Stomach (tissue), 19 donors: ENCODE measurements at regions of chr17 and their contacts with region 1.

Region 1: GRCh38 chr17:49575579-49576087 is at the start of gene NXPH3:
- DNase-seq: peak; percentile 80 to 86
- H3K4me3 ChIP-seq: peak within 1 kb of the TSS; percentile 57 to 83 (median 74)
- H3K27ac ChIP-seq: peak within 1 kb of the TSS in 4 of 5 donors; percentile 61 to 85 (median 74)
- H3K4me1 ChIP-seq: peaks cover 19 to 56% (median 43%) of the 10 kb centered on the region in 4 donors
- H3K27me3 ChIP-seq: peaks cover 0 to 58% (median 16%) of the 10 kb centered on the region in 3 donors
- CTCF ChIP-seq: peak in 3 of 7 experiments; percentile 45 to 82 (median 49)
- EP300 ChIP-seq: no peak
- POLR2A ChIP-seq: no peak
- total RNA-seq, gene NXPH3: 1.0 to 10.7 (median 1.3) TPM in 3 of 5 donors, not detected in the others

Region 2: GRCh38 chr17:49486012-49486641 is 89.5 kb before region 1 on chr17:
- intact Hi-C with region 1: no loop called
- DNase-seq: peak in 1 of 2 donors; percentile 69
- H3K4me3 ChIP-seq: no peak overlapping the region
- H3K27ac ChIP-seq: no peak overlapping the region
- H3K4me1 ChIP-seq: peaks cover 0 to 4% (median 0%) of the 10 kb centered on the region in 4 donors
- H3K27me3 ChIP-seq: peaks cover 0 to 84% (median 30%) of the 10 kb centered on the region in 3 donors
- CTCF ChIP-seq: no peak
- EP300 ChIP-seq: no peak
- POLR2A ChIP-seq: no peak

Region 3: GRCh38 chr17:49616601-49617131 is 41.0 kb after region 1 on chr17:
- intact Hi-C with region 1: no loop called
- DNase-seq: peak; percentile 48 to 52
- H3K4me3 ChIP-seq: no peak overlapping the region
- H3K27ac ChIP-seq: peak overlapping the region; percentile 45 to 77 (median 56)
- H3K4me1 ChIP-seq: peaks cover 18 to 63% (median 39%) of the 10 kb centered on the region in 4 donors
- H3K27me3 ChIP-seq: no peaks in the 10 kb centered on the region
- CTCF ChIP-seq: no peak
- EP300 ChIP-seq: no peak
- POLR2A ChIP-seq: no peak

Region 4: DNA sequence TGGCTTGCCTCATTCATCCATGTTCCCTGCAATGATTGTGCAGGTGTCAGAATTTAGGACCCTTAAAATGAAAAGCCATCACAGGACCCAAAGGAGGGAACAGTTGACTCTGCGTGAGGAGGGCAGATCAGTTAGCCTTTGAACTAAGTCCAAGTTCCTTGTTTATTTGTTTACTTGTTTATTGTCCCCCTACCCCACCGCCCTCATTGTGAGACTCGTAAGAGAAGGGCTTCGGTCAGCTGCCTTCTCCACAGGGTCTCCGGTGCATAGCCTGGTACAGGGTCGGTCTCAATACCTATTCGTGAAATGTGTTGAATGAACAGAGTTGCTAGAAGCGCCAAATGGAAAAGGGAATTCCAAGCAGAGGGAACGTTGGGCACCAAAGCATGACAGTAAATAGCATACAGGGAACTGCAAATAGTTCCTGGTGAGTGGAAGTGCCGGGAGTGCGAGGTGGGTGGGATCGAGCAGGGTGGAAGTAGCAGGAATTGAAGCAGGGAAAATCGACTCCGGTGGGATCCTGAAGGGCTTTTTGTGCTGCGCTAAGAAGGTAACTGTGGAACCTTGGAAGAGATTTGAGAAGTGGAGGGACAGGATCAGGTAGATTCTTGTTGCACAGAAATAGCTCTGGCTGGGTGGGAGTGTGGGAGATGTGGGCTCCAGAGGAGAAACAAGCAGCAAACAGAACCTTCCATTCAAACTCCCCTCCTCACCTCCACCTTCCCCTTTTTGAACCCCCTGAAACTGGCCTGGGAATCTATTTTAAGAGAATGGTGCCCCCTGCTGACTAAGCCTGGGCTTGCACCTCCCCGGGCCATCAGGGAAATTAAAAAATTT is 119.4 kb after region 1 on chr17:
- intact Hi-C with region 1: loop called (anchors 5 kb)
- DNase-seq: peak; percentile 70 to 72
- H3K4me3 ChIP-seq: peak overlapping the region in 1 of 4 donors; percentile 13
- H3K27ac ChIP-seq: peak overlapping the region in 1 of 5 donors; percentile 31
- H3K4me1 ChIP-seq: peaks cover 5 to 29% (median 13%) of the 10 kb centered on the region in 4 donors
- H3K27me3 ChIP-seq: no peaks in the 10 kb centered on the region
- CTCF ChIP-seq: peak in 6 of 7 experiments; percentile 70 to 98 (median 94)
- EP300 ChIP-seq: no peak
- POLR2A ChIP-seq: no peak

Region 5: GRCh38 chr17:49715717-49716279 is 140.2 kb after region 1 on chr17:
- intact Hi-C with region 1: no loop called
- DNase-seq: peak in 1 of 2 donors; percentile 74
- H3K4me3 ChIP-seq: no peak overlapping the region
- H3K27ac ChIP-seq: peak overlapping the region; percentile 24 to 85 (median 59)
- H3K4me1 ChIP-seq: peaks cover 15 to 33% (median 25%) of the 10 kb centered on the region in 4 donors
- H3K27me3 ChIP-seq: no peaks in the 10 kb centered on the region
- CTCF ChIP-seq: no peak
- EP300 ChIP-seq: no peak
- POLR2A ChIP-seq: no peak

Region 6: GRCh38 chr17:49763735-49764558 is 188.3 kb after region 1 on chr17 and contains the start of gene FAM117A:
- intact Hi-C with region 1: loop called (anchors 10 kb)
- DNase-seq: peak; percentile 97 to 99
- H3K4me3 ChIP-seq: peak within 1 kb of the TSS; percentile 83 to 99 (median 88)
- H3K27ac ChIP-seq: peak within 1 kb of the TSS; percentile 53 to 90 (median 83)
- H3K4me1 ChIP-seq: peaks cover 10 to 48% (median 29%) of the 10 kb centered on the region in 4 donors
- H3K27me3 ChIP-seq: no peaks in the 10 kb centered on the region
- CTCF ChIP-seq: no peak
- EP300 ChIP-seq: no peak
- POLR2A ChIP-seq: no peak
- total RNA-seq, gene FAM117A: 0.58 to 39.7 (median 6.7) TPM

Region 7: GRCh38 chr17:49851387-49852291 is 276.0 kb after region 1 on chr17:
- intact Hi-C with region 1: loop called (anchors 10 kb)
- DNase-seq: peak; percentile 75 to 88
- H3K4me3 ChIP-seq: peak overlapping the region; percentile 60 to 67 (median 62)
- H3K27ac ChIP-seq: peak overlapping the region in 4 of 5 donors; percentile 20 to 73 (median 37)
- H3K4me1 ChIP-seq: peaks cover 0 to 20% (median 17%) of the 10 kb centered on the region in 4 donors
- H3K27me3 ChIP-seq: peaks cover 0 to 7% (median 3%) of the 10 kb centered on the region in 3 donors
- CTCF ChIP-seq: peak in 4 of 7 experiments; percentile 43 to 66 (median 56)
- EP300 ChIP-seq: no peak
- POLR2A ChIP-seq: no peak